ENCODE measurements at regions of chr17 and their contacts with region 1.

Region 1: GRCh38 chr17:21457051-21458026 is 81.2 kb downstream of the KCNJ12 start:
- DNase-seq: peak; percentile 94
- ATAC-seq: peak; percentile 96

Region 2: DNA sequence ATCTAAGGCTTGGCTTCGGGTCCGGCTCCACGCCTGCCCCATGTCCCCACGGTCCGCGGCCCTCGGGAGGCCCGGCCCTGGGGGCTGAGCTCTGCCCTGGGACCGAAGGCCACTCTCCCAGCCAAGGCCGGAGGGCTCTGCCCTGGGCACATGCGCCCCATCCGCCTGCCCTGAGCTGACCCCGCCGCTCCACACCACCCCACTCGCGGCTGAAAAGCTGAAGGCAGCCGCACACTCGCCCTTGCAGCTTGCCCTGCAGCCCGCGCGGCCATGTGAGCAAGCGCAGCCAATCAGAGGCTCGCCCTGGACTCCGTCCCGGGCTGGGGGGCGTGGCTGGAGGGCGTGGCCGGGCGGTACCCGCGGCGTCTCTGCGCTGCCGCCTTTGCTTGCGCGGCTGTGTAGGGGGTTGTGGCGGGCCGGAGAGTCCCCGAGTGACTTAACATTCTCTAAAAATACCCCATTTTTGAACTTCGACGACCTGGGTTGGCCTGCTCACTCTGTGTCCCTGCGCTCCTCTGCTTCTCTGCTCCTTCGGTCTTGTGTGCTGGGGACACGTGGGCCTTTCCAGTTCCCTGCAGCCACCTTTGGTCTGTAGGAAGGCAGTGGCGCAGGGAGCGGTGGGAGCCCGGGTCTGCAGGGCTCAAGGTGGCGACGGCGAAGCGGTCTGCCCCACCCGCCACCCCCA is 181.6 kb before region 1 on chr17:
- intact Hi-C with region 1: loop called (anchors 10 kb)
- DNase-seq: peak; percentile 98
- ATAC-seq: peak; percentile 98

Region 3: DNA sequence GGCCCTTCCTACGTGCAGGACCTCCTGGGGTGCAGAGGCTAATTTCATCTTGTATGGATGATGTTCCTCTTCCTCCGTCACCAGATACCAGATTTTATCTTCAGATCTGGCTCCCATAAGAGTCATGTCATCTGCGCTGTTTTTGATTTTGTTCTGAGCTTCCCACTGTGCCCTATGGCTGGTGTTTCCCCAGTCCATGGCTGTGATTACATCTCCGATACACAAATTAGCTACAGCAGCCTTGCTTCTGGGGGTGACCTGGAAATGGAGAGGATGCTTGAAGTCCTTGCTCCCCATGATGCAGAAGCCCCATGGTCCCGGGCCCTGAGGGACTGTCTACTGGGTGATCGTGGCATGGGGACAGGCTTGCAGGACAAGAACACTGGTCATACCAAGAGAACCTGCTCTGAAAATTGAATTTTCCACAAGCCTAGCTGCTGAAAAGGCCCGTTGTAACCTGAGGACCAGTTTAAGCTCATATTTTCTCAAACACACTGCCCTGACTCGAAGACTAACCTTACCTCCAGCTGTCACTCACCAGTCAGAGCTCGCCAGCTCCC is 12.2 kb before region 1 on chr17:
- intact Hi-C with region 1: no loop called
- DNase-seq: no peak
- ATAC-seq: no peak